ENCODE measurements at regions of chr9 and their contacts with region 1.

Region 1: GRCh38 chr9:35553670-35554543 is 51.2 kb upstream of the TESK1 start:
- DNase-seq: peak; percentile 82

Region 2: GRCh38 chr9:35476596-35476995 is 77.3 kb before region 1 on chr9:
- in situ Hi-C with region 1: loop called (anchors 5 kb)
- DNase-seq: no peak

Measured in G401 (cell line).